H1 (cell line): ENCODE measurements at regions of chr3 and their contacts with region 1.

Region 1: GRCh38 chr3:127455541-127456450 is 134.7 kb downstream of the TPRA1 start:
- DNase-seq: peak; percentile 77 to 97
- H3K4me3 ChIP-seq: peak overlapping the region; percentile 29 to 67 (median 49)
- H3K27ac ChIP-seq: no peak overlapping the region
- H3K4me1 ChIP-seq: peaks cover 2 to 15% (median 8%) of the 10 kb centered on the region in 4 experiments; a peak in 5 of 7 replicates
- H3K27me3 ChIP-seq: peaks cover 19 to 41% (median 34%) of the 10 kb centered on the region in 4 experiments
- CTCF ChIP-seq: peak in 2 of 3 experiments; percentile 80 to 98; a peak in 3 of 4 replicates
- EP300 ChIP-seq: peak in 1 of 2 experiments; percentile 65; a peak in 1 of 3 replicates
- POLR2A ChIP-seq: no peak
- RAD21 ChIP-seq: peak; percentile 93 to 94

Region 2: DNA sequence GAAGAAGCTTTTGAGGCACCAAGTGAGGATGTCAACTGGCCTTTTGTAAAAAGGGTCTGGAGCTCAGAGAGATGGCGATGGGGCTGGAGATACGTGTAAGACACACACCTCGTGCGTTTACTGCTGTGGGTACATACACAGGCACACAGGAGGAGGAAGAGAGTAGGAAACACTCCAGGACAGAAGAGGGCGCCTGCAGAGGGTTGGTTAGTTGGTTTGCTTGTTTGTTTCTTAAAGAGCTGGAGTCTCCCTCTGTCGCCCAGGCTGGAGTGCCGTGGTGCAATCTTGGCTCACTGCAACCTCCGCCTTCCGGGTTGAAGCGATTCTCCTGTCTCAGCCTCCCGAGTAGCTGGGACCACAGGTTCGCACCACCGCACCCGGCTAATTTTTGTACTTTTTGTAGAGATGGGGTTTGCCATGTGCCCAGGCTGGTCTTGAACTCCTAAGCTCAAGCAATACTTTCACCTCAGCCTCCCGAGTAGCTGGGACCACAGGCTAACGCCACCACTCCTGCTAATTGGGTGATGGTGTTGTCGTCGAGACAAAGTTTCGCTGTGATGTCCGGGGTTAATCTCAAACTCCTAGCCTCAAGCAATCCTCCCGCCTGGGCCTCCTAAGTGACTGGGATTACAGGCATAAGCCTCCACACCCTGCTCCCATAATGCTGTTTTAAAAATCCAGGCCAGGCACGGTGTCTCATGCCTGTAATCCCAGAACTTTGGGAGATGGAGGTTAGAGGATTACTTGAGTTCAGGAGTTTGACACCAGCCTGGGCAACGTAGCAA is 166.7 kb before region 1 on chr3:
- CTCF ChIA-PET with region 1: interaction called, 11 read pairs
- POLR2A ChIA-PET with region 1: no interaction called
- DNase-seq: no peak
- H3K4me3 ChIP-seq: no peak overlapping the region
- H3K27ac ChIP-seq: no peak overlapping the region
- H3K4me1 ChIP-seq: no peaks in the 10 kb centered on the region
- H3K27me3 ChIP-seq: no peaks in the 10 kb centered on the region
- CTCF ChIP-seq: peak in 2 of 3 experiments; percentile 60 to 64; a peak in 3 of 4 replicates
- EP300 ChIP-seq: no peak
- POLR2A ChIP-seq: no peak
- RAD21 ChIP-seq: peak; percentile 48

Region 3: DNA sequence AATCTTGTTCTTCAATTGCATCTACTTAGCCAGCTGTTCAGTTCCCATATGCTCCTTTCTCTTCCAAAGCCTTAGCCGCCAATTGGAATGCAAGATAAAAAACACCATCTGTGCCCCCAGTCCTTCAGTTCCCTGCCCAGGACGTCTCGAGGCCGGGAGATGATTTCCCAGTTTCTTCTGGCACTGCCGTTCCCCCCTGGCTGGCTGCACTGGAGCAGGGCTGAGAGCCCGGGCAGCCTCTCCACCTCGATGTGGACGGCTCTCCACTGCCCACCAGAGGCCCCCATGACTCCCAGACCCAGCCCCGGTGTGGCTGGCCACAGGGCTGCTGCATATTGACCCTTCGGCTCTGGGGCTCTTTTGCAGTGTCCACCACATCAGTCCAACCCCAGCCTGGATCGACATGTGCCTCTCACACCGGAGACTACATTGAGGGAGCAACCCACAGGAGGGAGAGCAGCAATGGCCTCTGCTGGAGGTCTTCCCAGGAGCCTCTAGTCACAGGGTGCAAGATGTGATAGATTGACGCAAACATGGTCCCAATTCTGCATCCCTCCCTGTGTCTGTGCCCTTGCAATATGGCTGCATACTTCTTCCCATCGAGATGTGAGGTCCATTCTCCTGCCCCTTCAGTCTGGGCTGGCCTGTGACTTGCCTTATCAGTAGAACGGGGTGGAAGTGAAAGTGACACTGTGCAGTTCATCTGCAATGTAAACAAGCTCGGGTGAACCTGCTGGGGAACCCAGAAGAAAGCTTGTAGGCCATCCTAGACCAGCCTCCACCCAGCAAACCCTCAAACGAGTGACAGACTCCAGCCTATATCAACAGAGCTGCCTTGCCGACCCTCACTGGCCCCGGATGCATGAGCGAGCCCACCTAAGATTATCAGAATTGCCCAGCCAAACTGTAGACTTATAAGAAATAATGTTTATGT is 115.6 kb before region 1 on chr3:
- CTCF ChIA-PET with region 1: interaction called, 24 read pairs
- POLR2A ChIA-PET with region 1: no interaction called
- DNase-seq: peak in 1 of 2 experiments; percentile 41
- H3K4me3 ChIP-seq: no peak overlapping the region
- H3K27ac ChIP-seq: no peak overlapping the region
- H3K4me1 ChIP-seq: no peaks in the 10 kb centered on the region
- H3K27me3 ChIP-seq: no peaks in the 10 kb centered on the region
- CTCF ChIP-seq: peak in 1 of 3 experiments; percentile 26; a peak in 1 of 4 replicates
- EP300 ChIP-seq: no peak
- POLR2A ChIP-seq: no peak
- RAD21 ChIP-seq: peak; percentile 22 to 48; a peak in 3 of 4 replicates

Region 4: DNA sequence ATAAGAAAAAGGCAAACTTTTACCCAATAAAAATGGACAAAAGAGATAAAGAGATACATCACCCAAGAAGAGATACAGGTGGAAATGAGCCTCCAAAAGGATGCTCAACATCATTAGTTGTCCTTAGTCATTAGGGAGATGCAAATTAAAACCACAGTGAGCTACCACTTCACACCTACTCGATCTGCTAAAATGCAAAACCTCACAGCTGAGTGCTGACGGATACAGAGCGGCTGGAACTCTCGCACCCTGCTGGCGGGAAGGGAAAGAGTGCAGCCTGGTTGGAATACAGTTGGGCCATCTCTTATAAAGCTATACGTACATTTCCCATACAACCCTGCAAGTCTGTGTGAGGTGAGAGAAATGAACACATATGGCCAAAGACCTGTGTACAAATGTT is 89.4 kb before region 1 on chr3:
- CTCF ChIA-PET with region 1: interaction called, 11 read pairs
- POLR2A ChIA-PET with region 1: no interaction called
- DNase-seq: no peak
- H3K4me3 ChIP-seq: no peak overlapping the region
- H3K27ac ChIP-seq: no peak overlapping the region
- H3K4me1 ChIP-seq: peaks cover 0 to 9% (median 0%) of the 10 kb centered on the region in 4 experiments; a peak in 2 of 7 replicates
- H3K27me3 ChIP-seq: no peaks in the 10 kb centered on the region; a peak in 1 of 7 replicates
- CTCF ChIP-seq: peak in 2 of 3 experiments; percentile 46 to 51; a peak in 3 of 4 replicates
- EP300 ChIP-seq: no peak
- POLR2A ChIP-seq: no peak
- RAD21 ChIP-seq: peak; percentile 20 to 40; a peak in 3 of 4 replicates

Region 5: GRCh38 chr3:127520982-127521381 is 65.2 kb after region 1 on chr3:
- CTCF ChIA-PET with region 1: no interaction called
- POLR2A ChIA-PET with region 1: no interaction called
- DNase-seq: no peak
- H3K4me3 ChIP-seq: no peak overlapping the region
- H3K27ac ChIP-seq: no peak overlapping the region
- H3K4me1 ChIP-seq: no peaks in the 10 kb centered on the region
- H3K27me3 ChIP-seq: no peaks in the 10 kb centered on the region
- CTCF ChIP-seq: no peak
- EP300 ChIP-seq: no peak
- POLR2A ChIP-seq: no peak
- RAD21 ChIP-seq: no peak

Region 6: GRCh38 chr3:127544192-127544802 is 88.5 kb after region 1 on chr3:
- CTCF ChIA-PET with region 1: interaction called, 12 read pairs
- POLR2A ChIA-PET with region 1: interaction called, 3 read pairs
- DNase-seq: peak in 1 of 2 experiments; percentile 91
- H3K4me3 ChIP-seq: no peak overlapping the region
- H3K27ac ChIP-seq: no peak overlapping the region
- H3K4me1 ChIP-seq: peaks cover 0 to 9% (median 6%) of the 10 kb centered on the region in 4 experiments; a peak in 6 of 7 replicates
- H3K27me3 ChIP-seq: peaks cover 0 to 3% (median 0%) of the 10 kb centered on the region in 4 experiments; a peak in 2 of 7 replicates
- CTCF ChIP-seq: peak in 2 of 3 experiments; percentile 82 to 86; a peak in 3 of 4 replicates
- EP300 ChIP-seq: no peak
- POLR2A ChIP-seq: no peak
- RAD21 ChIP-seq: peak; percentile 79 to 89